CD14-positive monocyte (primary cell): ENCODE measurements at regions of chr17 and their contacts with region 1.

Region 1: DNA sequence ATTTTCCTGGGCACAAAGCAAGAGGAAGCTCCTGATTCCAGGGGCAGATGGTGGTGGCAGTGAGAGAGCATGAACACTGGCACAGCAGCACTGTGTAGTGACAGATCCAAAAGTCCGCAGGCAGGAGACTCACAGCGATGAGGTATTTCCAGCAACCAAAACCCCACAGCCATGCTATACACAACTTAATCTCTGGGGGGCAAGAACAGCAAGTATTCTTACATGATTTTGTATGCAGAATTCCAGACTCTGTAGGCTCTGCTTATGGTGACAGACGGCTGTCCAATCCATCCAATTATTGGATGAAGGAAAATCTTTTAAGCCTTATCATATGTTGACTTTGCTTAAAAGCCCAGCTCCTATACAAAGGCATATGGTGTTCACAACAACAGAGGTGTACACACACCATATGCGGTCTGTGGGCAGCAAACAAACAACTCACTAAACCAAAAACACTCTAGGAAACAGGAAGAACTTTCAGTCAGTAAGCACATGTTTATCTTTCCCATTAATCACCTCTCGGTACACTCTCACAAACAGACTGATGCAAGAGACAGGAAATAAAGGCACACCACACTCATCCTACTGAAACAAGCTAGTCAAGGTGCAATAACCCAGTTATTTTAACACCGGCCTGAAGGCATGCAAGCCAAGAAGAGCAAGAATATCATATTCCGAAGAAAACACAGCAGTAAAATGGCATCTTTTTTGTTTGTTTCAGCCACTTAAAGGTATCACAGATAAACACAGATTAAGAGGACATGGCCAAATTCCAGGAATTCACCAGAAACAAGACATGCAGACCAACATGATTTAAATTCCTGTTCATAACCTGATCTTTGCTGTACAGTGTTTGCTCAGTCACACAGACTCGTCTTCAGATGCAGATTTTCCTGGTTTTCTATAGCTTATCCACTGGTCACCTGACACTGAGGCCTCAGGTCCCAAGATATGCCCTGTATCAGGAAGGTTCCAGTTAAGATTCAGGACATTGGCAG is 47.8 kb downstream of the ERN1 start:
- DNase-seq: peak; percentile 53 to 83 (median 74)
- H3K4me3 ChIP-seq: no peak overlapping the region
- H3K4me3 Mint-ChIP-seq: peak overlapping the region in 1 of 2 donors; percentile 17
- H3K27ac ChIP-seq: peak overlapping the region in 1 of 2 donors; percentile 17
- H3K27ac Mint-ChIP-seq: peak overlapping the region in 6 of 7 donors; percentile 17 to 87 (median 52)
- H3K4me1 ChIP-seq: peaks cover 40 to 44% of the 10 kb centered on the region in 2 donors
- H3K4me1 Mint-ChIP-seq: peaks cover 18% of the 10 kb centered on the region
- H3K27me3 ChIP-seq: no peaks in the 10 kb centered on the region
- H3K27me3 Mint-ChIP-seq: peaks cover 0 to under 1% (median 0%) of the 10 kb centered on the region in 3 donors
- CTCF ChIP-seq: no peak

Region 2: GRCh38 chr17:64056269-64057005 is 25.7 kb before region 1 on chr17:
- intact Hi-C with region 1: no loop called
- DNase-seq: no peak
- H3K4me3 ChIP-seq: no peak overlapping the region
- H3K4me3 Mint-ChIP-seq: no peak overlapping the region
- H3K27ac ChIP-seq: peak overlapping the region in 1 of 2 donors; percentile 10
- H3K27ac Mint-ChIP-seq: peak overlapping the region in 5 of 7 donors; percentile 12 to 91 (median 46)
- H3K4me1 ChIP-seq: peaks cover 19 to 21% of the 10 kb centered on the region in 2 donors
- H3K4me1 Mint-ChIP-seq: peaks cover 21% of the 10 kb centered on the region
- H3K27me3 ChIP-seq: no peaks in the 10 kb centered on the region
- H3K27me3 Mint-ChIP-seq: peaks cover 0 to 2% (median 0%) of the 10 kb centered on the region in 3 donors
- CTCF ChIP-seq: no peak

Region 3: GRCh38 chr17:64117981-64118979 is 36.2 kb after region 1 on chr17:
- intact Hi-C with region 1: loop called (anchors 5 kb)
- DNase-seq: peak; percentile 69 to 82 (median 80)
- H3K4me3 ChIP-seq: peak overlapping the region in 2 of 3 experiments; percentile 27 to 63
- H3K4me3 Mint-ChIP-seq: peak overlapping the region; percentile 54 to 63
- H3K27ac ChIP-seq: peak overlapping the region; percentile 72 to 79
- H3K27ac Mint-ChIP-seq: peak overlapping the region; percentile 84 to 92 (median 91)
- H3K4me1 ChIP-seq: peaks cover 59 to 67% of the 10 kb centered on the region in 2 donors
- H3K4me1 Mint-ChIP-seq: peaks cover 61% of the 10 kb centered on the region
- H3K27me3 ChIP-seq: no peaks in the 10 kb centered on the region
- H3K27me3 Mint-ChIP-seq: peaks cover 0 to 3% (median 0%) of the 10 kb centered on the region in 3 donors
- CTCF ChIP-seq: no peak